ENCODE measurements at regions of chr9 and their contacts with region 1.

Region 1: DNA sequence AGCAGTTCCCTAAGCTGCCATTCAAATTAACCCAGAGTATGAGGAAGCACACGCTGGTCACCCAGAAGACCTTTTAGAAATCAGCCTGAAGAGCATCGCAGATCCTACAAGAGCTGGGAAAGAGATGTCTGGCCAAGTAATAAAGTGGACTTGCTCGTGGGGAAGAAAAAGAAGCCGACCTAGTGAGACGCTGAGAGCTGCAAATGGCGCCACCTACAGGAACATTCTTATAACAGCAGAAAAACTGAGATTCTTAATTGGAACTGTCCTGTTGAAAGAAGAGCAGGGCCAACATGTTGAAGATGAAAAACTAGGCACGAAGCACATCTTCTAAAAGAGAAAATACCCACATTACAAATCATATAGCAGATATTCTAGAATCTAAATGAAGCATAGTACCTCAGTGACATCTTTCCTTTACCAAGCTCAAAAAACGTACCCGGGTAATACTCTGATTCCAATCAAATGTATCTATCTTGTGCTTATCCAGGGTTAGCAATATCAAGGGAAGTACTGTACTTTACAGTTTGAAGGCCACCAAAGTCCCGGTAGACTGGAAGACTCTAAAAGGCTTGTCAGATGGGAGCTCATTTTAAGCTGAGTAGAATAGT is 3.9 kb upstream of the GNAQ start:
- DNase-seq: peak; percentile 65
- ATAC-seq: no peak
- H3K4me3 Mint-ChIP-seq: peak overlapping the region; percentile 20
- H3K27ac Mint-ChIP-seq: no peak overlapping the region
- H3K4me1 Mint-ChIP-seq: peaks cover 26% of the 10 kb centered on the region
- H3K27me3 Mint-ChIP-seq: peaks cover 7% of the 10 kb centered on the region
- CTCF ChIP-seq: peak; percentile 74

Region 2: DNA sequence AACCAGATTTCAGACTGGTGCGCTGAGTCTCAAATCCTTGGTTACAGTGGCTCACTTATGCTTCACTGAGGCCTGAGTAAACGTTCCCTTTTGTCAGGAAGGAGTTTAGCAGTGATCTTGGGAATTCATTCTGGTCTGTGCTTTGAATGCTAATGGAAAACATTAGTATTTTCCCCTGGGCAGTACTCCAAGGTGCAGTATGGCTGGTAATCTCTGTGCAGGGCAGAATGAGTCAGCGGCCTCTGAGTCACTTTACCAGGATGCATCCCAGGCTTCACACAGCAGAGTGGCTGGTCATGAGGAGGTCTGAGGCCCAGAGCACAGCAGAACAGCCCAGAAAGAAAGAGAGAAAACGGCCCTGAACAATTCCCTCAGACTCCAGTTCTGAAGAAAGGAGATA is 1217.2 kb before region 1 on chr9:
- CTCF ChIA-PET with region 1: no interaction called
- POLR2A ChIA-PET with region 1: no interaction called
- intact Hi-C with region 1: no loop called
- DNase-seq: no peak
- ATAC-seq: no peak
- H3K4me3 Mint-ChIP-seq: no peak overlapping the region
- H3K27ac Mint-ChIP-seq: no peak overlapping the region
- H3K4me1 Mint-ChIP-seq: no peaks in the 10 kb centered on the region
- H3K27me3 Mint-ChIP-seq: peaks cover 10% of the 10 kb centered on the region
- CTCF ChIP-seq: no peak

Region 3: DNA sequence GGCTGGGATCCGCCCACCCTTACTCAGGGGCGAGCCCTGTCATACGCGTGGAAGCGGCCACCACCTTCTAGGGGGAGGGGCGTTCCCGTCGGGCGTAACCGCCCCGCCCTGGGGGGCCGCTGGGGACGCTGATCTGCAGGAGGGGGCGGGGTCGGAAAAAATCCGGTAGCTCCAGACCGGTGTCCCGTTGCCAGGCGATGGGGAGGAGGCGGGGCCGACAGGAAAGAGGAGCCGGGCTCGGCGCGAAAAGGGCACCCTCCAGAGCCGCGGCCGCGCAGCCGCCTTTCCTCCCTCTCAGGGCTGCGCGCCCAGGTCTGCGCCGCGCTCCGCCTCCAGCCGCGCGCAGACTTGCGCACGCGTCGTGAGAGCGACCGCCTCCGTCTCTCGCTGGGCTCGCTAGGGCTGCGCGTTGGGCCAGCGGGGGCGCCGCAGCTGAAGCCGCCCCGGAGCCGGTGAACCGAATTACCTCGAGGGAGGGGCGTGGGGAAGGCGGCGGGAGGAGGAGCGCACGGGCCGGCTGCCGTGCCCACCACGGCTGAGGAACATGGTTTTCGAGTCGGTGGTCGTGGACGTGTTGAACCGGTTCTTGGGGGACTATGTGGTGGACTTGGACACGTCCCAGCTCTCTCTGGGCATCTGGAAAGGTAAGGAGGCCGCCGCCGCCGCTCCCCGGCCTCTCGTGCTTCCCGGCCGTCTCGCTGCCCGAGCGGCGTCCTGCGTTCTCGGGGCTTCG is 858.2 kb before region 1 on chr9 and contains the start of gene VPS13A:
- CTCF ChIA-PET with region 1: no interaction called
- POLR2A ChIA-PET with region 1: no interaction called
- intact Hi-C with region 1: loop called (anchors 5 kb)
- DNase-seq: peak; percentile 98
- ATAC-seq: peak; percentile 87
- H3K4me3 Mint-ChIP-seq: peak within 1 kb of the TSS; percentile 90
- H3K27ac Mint-ChIP-seq: peak within 1 kb of the TSS; percentile 92
- H3K4me1 Mint-ChIP-seq: peaks cover 25% of the 10 kb centered on the region
- H3K27me3 Mint-ChIP-seq: no peaks in the 10 kb centered on the region
- CTCF ChIP-seq: no peak
- total RNA-seq, gene VPS13A: 34.4 to 37.0 TPM

Region 4: DNA sequence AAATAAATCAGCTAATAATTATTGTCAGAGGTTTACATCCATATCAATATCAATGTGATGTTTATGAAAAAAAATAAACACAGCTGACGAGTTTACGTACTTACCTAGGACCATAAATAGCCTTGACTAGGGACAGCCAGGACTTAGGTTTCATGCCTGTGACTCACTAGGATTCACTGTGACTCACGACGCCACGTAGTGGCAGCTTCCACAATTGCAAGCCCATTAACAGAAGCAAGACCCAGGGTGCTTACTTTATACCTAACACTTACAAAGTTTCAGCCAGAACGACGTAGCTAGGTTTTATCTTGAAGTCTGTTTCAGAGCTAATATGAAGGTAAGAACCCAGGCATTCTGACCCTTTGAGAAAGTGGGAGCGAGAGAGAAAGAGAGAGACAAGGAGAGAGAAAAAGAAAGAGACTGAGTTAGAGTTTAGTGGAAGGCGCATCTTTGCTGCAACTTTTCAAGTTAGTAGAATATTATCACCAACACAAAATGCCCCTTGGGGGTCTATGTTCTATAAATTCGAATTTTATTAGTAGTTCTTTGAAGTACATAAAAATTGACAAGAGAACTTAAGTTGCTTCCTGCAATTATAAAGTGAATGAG is 578.6 kb before region 1 on chr9:
- CTCF ChIA-PET with region 1: interaction called, 15 read pairs
- POLR2A ChIA-PET with region 1: no interaction called
- intact Hi-C with region 1: no loop called
- DNase-seq: peak; percentile 95
- ATAC-seq: peak; percentile 93
- H3K4me3 Mint-ChIP-seq: no peak overlapping the region
- H3K27ac Mint-ChIP-seq: no peak overlapping the region
- H3K4me1 Mint-ChIP-seq: peaks cover 13% of the 10 kb centered on the region
- H3K27me3 Mint-ChIP-seq: no peaks in the 10 kb centered on the region
- CTCF ChIP-seq: peak; percentile 84

Region 5: DNA sequence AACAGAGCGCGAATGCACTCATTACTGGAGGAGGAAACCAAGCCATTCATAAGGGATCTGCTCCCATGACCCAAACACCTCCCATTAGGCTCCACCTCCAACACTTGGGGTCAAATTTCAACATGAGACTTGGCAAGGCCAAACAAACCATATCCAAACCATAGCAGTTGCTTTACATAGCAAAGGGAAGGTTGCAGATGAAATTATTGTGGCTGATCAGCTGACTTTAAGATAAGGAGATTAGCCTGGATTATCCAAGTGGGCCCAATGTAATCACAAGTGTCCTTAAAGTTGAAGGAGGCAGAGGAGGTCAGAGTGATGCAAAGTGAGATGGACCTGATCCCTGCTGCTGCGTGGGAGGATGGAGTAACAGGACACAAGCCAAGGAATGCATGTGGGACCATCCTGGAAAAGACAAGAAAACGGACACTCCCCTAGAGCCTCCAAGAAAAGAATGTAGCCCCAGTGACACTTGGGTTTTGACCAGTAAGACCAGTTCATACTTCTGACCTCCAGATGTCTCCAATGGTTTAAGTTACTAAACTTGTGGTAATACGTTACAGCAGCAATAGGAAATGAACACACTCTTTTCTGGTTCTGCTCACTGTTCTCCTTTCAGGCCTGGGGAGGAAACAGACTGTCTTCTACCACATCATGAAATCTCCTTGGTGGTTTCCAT is 171.1 kb before region 1 on chr9:
- CTCF ChIA-PET with region 1: interaction called, 14 read pairs
- POLR2A ChIA-PET with region 1: no interaction called
- intact Hi-C with region 1: no loop called
- DNase-seq: no peak
- ATAC-seq: no peak
- H3K4me3 Mint-ChIP-seq: no peak overlapping the region
- H3K27ac Mint-ChIP-seq: no peak overlapping the region
- H3K4me1 Mint-ChIP-seq: no peaks in the 10 kb centered on the region
- H3K27me3 Mint-ChIP-seq: no peaks in the 10 kb centered on the region
- CTCF ChIP-seq: no peak

Region 6: GRCh38 chr9:77977210-77977611 is 58.3 kb before region 1 on chr9:
- CTCF ChIA-PET with region 1: interaction called, 67 read pairs
- POLR2A ChIA-PET with region 1: interaction called, 9 read pairs
- intact Hi-C with region 1: loop called (anchors 2 kb)
- DNase-seq: peak; percentile 68
- ATAC-seq: no peak
- H3K4me3 Mint-ChIP-seq: no peak overlapping the region
- H3K27ac Mint-ChIP-seq: peak overlapping the region; percentile 90
- H3K4me1 Mint-ChIP-seq: peaks cover 54% of the 10 kb centered on the region
- H3K27me3 Mint-ChIP-seq: no peaks in the 10 kb centered on the region
- CTCF ChIP-seq: peak; percentile 38

Region 7: GRCh38 chr9:78023003-78023741 is 12.3 kb before region 1 on chr9:
- CTCF ChIA-PET with region 1: interaction called, 17 read pairs
- POLR2A ChIA-PET with region 1: no interaction called
- intact Hi-C with region 1: no loop called
- DNase-seq: peak; percentile 11
- ATAC-seq: peak; percentile 49
- H3K4me3 Mint-ChIP-seq: peak overlapping the region; percentile 45
- H3K27ac Mint-ChIP-seq: peak overlapping the region; percentile 49
- H3K4me1 Mint-ChIP-seq: peaks cover 41% of the 10 kb centered on the region
- H3K27me3 Mint-ChIP-seq: no peaks in the 10 kb centered on the region
- CTCF ChIP-seq: no peak

Region 8: GRCh38 chr9:78074385-78075291 is 39.1 kb after region 1 on chr9:
- CTCF ChIA-PET with region 1: interaction called, 16 read pairs
- POLR2A ChIA-PET with region 1: interaction called, 5 read pairs
- intact Hi-C with region 1: no loop called
- DNase-seq: peak; percentile 47
- ATAC-seq: peak; percentile 76
- H3K4me3 Mint-ChIP-seq: peak overlapping the region; percentile 38
- H3K27ac Mint-ChIP-seq: peak overlapping the region; percentile 93
- H3K4me1 Mint-ChIP-seq: peaks cover 43% of the 10 kb centered on the region
- H3K27me3 Mint-ChIP-seq: no peaks in the 10 kb centered on the region
- CTCF ChIP-seq: no peak

Region 9: DNA sequence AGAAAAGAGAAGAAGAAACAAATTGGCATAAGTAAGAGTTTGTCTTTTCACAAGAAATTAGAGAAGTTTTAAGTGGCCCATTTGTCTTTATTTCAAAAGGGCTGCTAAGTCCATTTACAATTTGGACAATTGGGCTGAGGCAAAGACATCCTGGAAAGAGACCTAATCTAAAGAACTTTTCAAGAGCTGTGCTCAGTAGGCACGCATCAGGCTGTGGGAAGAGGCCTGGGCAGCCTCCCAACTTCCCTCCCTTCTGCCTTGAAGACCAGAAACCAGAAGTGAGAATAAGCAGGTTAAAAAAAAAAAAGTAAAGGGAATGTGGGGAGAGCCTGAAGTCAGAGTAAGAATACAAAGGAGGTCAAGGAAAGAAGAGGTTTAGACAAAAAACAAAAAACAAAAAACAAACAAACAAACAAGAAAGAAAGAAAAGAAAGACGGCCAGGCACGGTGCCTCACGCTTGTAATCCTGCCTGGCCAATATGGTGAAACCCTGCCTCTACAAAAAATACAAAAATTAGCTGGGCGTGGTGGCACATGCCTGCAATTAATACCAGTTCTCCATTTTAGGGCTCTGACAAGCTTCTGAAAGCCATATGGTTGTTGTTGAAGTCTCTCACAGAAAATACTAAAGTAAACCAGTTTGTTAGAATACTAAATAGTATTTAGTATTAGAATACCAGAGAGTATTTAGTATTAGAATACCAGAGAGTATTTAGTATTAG is 152.4 kb after region 1 on chr9:
- CTCF ChIA-PET with region 1: no interaction called
- POLR2A ChIA-PET with region 1: no interaction called
- intact Hi-C with region 1: no loop called
- DNase-seq: no peak
- ATAC-seq: no peak
- H3K4me3 Mint-ChIP-seq: no peak overlapping the region
- H3K27ac Mint-ChIP-seq: no peak overlapping the region
- H3K4me1 Mint-ChIP-seq: no peaks in the 10 kb centered on the region
- H3K27me3 Mint-ChIP-seq: no peaks in the 10 kb centered on the region
- CTCF ChIP-seq: no peak